ENCODE measurements at regions of chr11 and their contacts with region 1.

Region 1: DNA sequence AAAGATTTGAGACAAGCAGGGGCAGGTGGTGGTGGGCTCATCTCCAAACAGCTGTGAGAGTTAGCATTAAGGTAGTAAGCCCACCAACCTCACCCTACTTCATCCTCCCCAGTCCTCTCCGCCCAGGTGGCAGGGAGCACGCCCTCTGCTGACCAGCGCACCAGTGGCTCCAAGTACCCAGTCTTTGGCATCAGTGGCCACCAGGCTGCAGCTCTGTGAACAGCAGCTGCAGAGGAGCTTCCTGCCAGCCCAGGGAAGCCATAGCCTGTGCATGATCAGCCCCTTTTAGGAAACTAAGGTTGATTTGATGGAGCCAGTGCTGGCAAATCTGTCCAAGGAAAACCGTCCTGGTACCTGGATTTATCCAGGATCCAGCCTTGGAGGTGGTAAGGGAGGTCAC is 21.7 kb downstream of the CAVIN3 start:
- DNase-seq: no peak
- ATAC-seq: peak; percentile 96
- H3K4me3 ChIP-seq: no peak overlapping the region
- H3K27ac ChIP-seq: no peak overlapping the region
- H3K4me1 ChIP-seq: no peaks in the 10 kb centered on the region
- H3K27me3 ChIP-seq: no peaks in the 10 kb centered on the region
- CTCF ChIP-seq: peak; percentile 49 to 75 (median 67); a peak in 5 of 6 replicates
- EP300 ChIP-seq: no peak
- POLR2A ChIP-seq: no peak
- RAD21 ChIP-seq: peak; percentile 28; the same call in 1 of the 2 replicates

Region 2: GRCh38 chr11:6022956-6023355 is 275.6 kb before region 1 on chr11:
- CTCF ChIA-PET with region 1: interaction called, 7 read pairs
- POLR2A ChIA-PET with region 1: no interaction called
- RAD21 ChIA-PET with region 1: no interaction called
- SMC1A ChIA-PET with region 1: no interaction called
- in situ Hi-C with region 1: no loop called
- intact Hi-C with region 1: loop called (anchors 5 kb)
- DNase-seq: peak; percentile 5
- ATAC-seq: peak; percentile 76
- H3K4me3 ChIP-seq: no peak overlapping the region
- H3K27ac ChIP-seq: no peak overlapping the region
- H3K4me1 ChIP-seq: no peaks in the 10 kb centered on the region
- H3K27me3 ChIP-seq: no peaks in the 10 kb centered on the region
- CTCF ChIP-seq: peak; percentile 49 to 59 (median 53); a peak in 5 of 6 replicates
- EP300 ChIP-seq: no peak
- POLR2A ChIP-seq: no peak
- RAD21 ChIP-seq: peak; percentile 75

Region 3: DNA sequence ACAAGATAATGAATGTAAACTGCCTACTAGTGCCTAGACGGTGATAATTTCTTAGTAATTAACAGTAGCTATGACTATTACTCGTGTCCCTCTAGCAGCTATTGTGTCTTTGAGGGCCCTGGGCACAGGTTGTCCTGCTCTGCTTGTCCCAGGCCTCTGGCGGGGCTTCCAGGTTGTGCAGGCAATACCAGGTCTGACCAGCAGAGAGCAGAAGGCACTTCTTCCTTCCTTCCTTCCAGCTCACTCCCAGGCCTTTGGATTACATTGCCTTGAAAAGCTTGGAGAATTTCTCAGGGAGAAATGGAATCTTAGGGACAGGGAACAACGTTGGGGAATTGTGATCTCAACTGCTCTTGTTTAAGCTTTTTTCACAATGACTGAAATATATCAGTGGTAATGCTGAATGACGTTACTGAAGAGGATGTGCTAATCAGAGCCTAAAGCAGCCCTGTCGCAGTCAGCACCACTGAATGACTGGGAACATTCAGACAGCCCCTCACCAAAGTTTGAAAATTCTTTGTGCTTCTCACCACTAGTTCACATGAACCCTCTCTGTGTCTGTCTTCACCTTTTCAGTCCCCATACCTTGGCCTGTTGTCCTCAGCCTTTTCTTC is 47.4 kb before region 1 on chr11:
- CTCF ChIA-PET with region 1: interaction called, 15 read pairs
- POLR2A ChIA-PET with region 1: no interaction called
- RAD21 ChIA-PET with region 1: interaction called, 3 read pairs
- SMC1A ChIA-PET with region 1: interaction called, 3 read pairs
- in situ Hi-C with region 1: no loop called
- intact Hi-C with region 1: no loop called
- DNase-seq: no peak
- ATAC-seq: peak; percentile 91
- H3K4me3 ChIP-seq: no peak overlapping the region
- H3K27ac ChIP-seq: no peak overlapping the region
- H3K4me1 ChIP-seq: no peaks in the 10 kb centered on the region
- H3K27me3 ChIP-seq: 0 out of 4 replicates have a peak, but pooled peaks cover 0 to 3% of the 10 kb centered on the region in 2 experiments
- CTCF ChIP-seq: peak; percentile 68 to 86 (median 75)
- EP300 ChIP-seq: no peak
- POLR2A ChIP-seq: no peak
- RAD21 ChIP-seq: peak; percentile 56